Activated naive CD8-positive, alpha-beta T cell treated with anti-CD3 and anti-CD28 coated beads, Interleukin-2, amount 10 ng/mL, durations not matched to agents 7 days and 5 days (primary cell): ENCODE measurements at regions of chr14 and their contacts with region 1.

Region 1: GRCh38 chr14:22872033-22872832 is 693 bp downstream of the LRP10 start:
- DNase-seq: peak; percentile 79
- ATAC-seq: peak; percentile 28
- H3K4me3 Mint-ChIP-seq: peak overlapping the region; percentile 88
- H3K27ac Mint-ChIP-seq: peak overlapping the region; percentile 97
- H3K4me1 Mint-ChIP-seq: peaks cover 23% of the 10 kb centered on the region
- H3K27me3 Mint-ChIP-seq: no peaks in the 10 kb centered on the region

Region 2: GRCh38 chr14:22822571-22823098 is 49.6 kb before region 1 on chr14:
- POLR2A ChIA-PET with region 1: interaction called, 17 read pairs
- DNase-seq: peak; percentile 79
- ATAC-seq: peak; percentile 85
- H3K4me3 Mint-ChIP-seq: peak overlapping the region; percentile 68
- H3K27ac Mint-ChIP-seq: no peak overlapping the region
- H3K4me1 Mint-ChIP-seq: peaks cover 22% of the 10 kb centered on the region
- H3K27me3 Mint-ChIP-seq: peaks cover 23% of the 10 kb centered on the region

Region 3: DNA sequence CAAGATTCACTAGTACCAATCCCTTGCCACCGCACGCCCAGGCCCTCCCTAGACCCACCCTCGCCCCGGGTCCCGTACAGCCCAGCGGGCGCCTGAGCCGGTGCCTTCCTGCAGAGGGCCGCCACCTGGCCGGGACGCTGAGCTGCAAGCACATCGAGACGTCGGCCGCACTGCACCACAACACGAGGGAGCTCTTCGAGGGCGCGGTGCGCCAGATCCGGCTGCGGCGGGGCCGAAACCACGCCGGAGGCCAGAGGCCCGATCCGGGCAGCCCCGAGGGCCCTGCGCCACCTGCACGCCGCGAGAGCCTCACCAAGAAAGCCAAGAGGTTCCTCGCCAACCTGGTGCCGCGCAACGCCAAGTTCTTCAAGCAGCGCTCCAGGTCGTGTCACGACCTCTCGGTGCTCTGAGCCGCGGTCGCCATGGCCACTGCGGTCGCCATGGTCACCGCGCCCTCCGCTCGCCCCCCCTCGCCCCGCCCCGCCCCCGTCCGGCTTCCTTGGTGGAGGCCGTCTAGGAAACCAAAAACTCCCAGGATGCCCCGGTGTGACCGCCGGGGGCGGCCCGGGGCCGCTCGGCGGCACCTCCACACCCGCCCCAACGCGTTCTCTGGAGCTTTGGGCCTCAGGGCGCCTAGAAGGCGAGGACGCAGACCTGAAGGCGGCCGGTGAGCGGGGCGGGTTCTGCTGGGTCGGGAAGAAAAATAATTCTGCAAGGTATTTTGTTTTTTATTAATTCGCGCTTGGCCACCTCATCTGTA is 14.4 kb after region 1 on chr14:
- POLR2A ChIA-PET with region 1: interaction called, 27 read pairs
- DNase-seq: peak; percentile 81
- ATAC-seq: peak; percentile 77
- H3K4me3 Mint-ChIP-seq: peak overlapping the region; percentile 85
- H3K27ac Mint-ChIP-seq: peak overlapping the region; percentile 74
- H3K4me1 Mint-ChIP-seq: peaks cover 23% of the 10 kb centered on the region
- H3K27me3 Mint-ChIP-seq: peaks cover 25% of the 10 kb centered on the region

Region 4: DNA sequence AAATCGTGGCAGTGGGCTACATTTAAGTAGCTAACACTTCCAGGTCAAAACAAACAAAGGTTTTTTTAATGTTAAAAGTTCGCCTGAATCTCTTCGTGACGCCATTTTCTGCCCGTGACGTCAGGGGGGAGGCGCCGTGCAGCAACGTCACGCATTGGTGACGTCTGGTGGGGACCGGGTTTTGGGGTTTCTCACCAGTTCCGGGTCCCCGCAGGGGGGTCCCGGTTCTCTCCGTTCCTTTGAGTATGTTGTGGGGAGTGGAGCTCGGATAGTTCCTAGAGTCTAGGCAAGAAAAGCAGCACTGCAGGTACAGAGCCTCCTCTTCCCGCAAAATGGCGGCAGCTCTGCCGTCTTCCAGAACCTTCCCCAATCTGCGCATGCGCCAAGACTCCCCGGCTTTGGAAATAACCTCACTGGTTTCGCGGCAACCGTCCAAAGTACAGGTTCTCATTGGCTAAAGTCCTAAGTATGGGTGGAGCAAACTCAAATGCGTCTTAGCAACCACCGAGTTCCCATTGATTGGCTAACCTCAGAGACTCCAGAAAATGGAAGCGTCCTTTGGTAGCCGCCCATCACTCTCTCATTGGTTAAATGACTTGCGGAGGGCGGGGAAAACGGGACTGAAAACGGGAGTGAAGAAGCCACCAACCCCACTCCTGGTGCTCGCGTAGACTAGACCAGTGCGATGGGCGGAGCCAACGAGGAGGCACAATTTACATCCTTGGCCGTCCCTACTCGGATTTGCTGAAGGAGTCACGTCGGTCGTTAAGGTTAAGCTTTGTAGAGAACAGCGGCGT is 46.8 kb after region 1 on chr14 and contains the start of gene RBM23:
- POLR2A ChIA-PET with region 1: interaction called, 19 read pairs
- DNase-seq: peak; percentile 98
- ATAC-seq: peak; percentile 89
- H3K4me3 Mint-ChIP-seq: peak within 1 kb of the TSS; percentile 94
- H3K27ac Mint-ChIP-seq: peak within 1 kb of the TSS; percentile 99
- H3K4me1 Mint-ChIP-seq: peaks cover 24% of the 10 kb centered on the region
- H3K27me3 Mint-ChIP-seq: no peaks in the 10 kb centered on the region
- total RNA-seq, gene RBM23: 91.7 to 98.0 TPM

Region 5: DNA sequence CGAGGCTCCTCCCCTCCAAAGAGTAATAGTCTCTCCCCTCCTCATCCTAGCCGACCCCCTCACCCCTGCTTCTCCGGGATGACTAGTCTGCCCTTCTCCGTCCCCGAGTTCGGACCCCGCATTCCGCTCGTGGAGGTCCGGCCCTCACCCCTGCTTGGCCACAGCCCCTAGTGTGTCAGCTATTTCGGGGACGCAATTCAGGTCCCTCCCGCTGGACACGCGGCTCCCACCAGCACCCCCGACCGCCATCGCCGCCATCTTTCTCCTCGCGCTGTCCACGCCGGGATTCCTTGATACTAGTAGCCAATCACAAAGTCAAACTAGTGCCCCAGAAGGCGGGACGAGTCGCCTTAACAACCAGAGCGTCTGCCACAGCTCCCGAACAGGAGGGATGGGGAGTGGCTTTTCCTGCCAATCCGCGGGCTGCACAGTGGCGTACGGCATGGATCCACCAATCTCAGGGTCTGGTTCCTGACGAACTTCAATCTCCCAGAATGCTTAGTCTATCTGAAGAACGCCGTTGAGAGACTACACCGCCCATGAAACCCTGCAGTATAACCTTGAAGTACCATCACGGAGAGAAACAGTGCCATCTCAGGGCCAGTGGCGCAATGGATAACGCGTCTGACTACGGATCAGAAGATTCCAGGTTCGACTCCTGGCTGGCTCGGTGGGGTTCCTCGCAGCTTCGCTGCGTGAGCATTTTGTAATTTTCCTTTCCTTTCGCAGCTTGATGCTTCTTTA is 57.0 kb after region 1 on chr14 and contains the start of gene PRMT5:
- POLR2A ChIA-PET with region 1: interaction called, 11 read pairs
- DNase-seq: peak; percentile 88
- ATAC-seq: peak; percentile 98
- H3K4me3 Mint-ChIP-seq: no peak within 1 kb of the TSS
- H3K27ac Mint-ChIP-seq: no peak within 1 kb of the TSS
- H3K4me1 Mint-ChIP-seq: peaks cover 25% of the 10 kb centered on the region
- H3K27me3 Mint-ChIP-seq: no peaks in the 10 kb centered on the region
- total RNA-seq, gene PRMT5: 35.7 to 40.1 TPM